Activated CD4-positive, alpha-beta T cell treated with anti-CD3 and anti-CD28 coated beads for 36 hours (primary cell): ENCODE measurements at regions of chr1 and their contacts with region 1.

Region 1: DNA sequence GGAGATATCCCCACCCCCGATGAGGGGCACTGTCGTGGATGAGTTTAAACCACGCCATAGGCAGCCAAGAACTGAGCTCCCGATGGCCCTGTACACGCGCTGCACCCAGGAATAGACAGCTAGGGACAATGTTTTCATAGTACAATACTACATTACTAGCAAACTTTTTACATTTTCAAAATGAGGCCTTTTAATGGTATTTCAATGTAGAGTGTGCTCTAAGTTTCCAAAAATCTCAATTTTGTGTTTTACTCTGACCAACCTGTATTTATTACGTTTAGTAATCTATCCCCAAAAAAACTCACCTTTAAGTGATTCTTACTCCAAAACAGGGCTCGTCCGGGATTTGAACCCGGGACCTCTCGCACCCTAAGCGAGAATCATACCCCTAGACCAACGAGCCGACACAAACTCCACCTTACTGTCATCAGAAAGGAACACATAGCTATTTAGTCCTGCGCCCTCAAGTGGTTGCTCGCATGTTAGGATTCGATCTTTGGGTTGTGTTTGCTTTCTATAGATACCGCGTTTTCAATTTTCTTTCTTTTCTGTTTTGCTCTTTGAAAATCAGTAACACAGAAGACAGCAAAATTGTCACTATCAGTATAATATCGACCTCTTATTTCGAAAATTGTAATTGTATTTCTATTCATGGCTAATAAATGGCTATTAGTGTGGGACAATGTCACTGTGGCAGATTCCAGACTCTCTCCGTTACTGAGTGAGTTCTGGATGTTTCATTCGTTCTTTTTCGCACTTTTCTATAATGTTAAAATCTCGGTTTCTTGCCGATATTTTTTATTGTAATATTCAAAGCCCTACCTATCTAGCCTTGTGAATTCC is 6.4 kb upstream of the MPZL1 start:
- DNase-seq: peak; percentile 91
- ATAC-seq: peak; percentile 49
- H3K4me3 Mint-ChIP-seq: peak overlapping the region; percentile 83
- H3K27ac Mint-ChIP-seq: peak overlapping the region; percentile 91
- H3K4me1 Mint-ChIP-seq: peaks cover 37% of the 10 kb centered on the region
- H3K27me3 Mint-ChIP-seq: no peaks in the 10 kb centered on the region

Region 2: GRCh38 chr1:166838766-166839599 is 876.4 kb before region 1 on chr1 and contains the start of gene POGK:
- CTCF ChIA-PET with region 1: no interaction called
- POLR2A ChIA-PET with region 1: no interaction called
- intact Hi-C with region 1: loop called in 1 of 2 experiments (anchors 1 kb)
- DNase-seq: peak; percentile 93
- ATAC-seq: peak; percentile 97
- H3K4me3 Mint-ChIP-seq: peak within 1 kb of the TSS; percentile 90
- H3K27ac Mint-ChIP-seq: peak within 1 kb of the TSS; percentile 98
- H3K4me1 Mint-ChIP-seq: peaks cover 56% of the 10 kb centered on the region
- H3K27me3 Mint-ChIP-seq: no peaks in the 10 kb centered on the region
- total RNA-seq, gene POGK: 36.2 to 40.6 TPM

Region 3: GRCh38 chr1:167599957-167600581 is 115.3 kb before region 1 on chr1:
- CTCF ChIA-PET with region 1: interaction called, 16 read pairs
- POLR2A ChIA-PET with region 1: no interaction called
- intact Hi-C with region 1: loop called in 1 of 2 experiments (anchors 1 kb)
- DNase-seq: peak; percentile 63
- ATAC-seq: peak; percentile 88
- H3K4me3 Mint-ChIP-seq: peak overlapping the region; percentile 21
- H3K27ac Mint-ChIP-seq: peak overlapping the region; percentile 89
- H3K4me1 Mint-ChIP-seq: peaks cover 37% of the 10 kb centered on the region
- H3K27me3 Mint-ChIP-seq: no peaks in the 10 kb centered on the region

Region 4: GRCh38 chr1:167687919-167688519 is 27.4 kb before region 1 on chr1:
- CTCF ChIA-PET with region 1: interaction called, 12 read pairs
- POLR2A ChIA-PET with region 1: no interaction called
- intact Hi-C with region 1: no loop called
- DNase-seq: peak; percentile 87
- ATAC-seq: peak; percentile 76
- H3K4me3 Mint-ChIP-seq: no peak overlapping the region
- H3K27ac Mint-ChIP-seq: no peak overlapping the region
- H3K4me1 Mint-ChIP-seq: peaks cover 25% of the 10 kb centered on the region
- H3K27me3 Mint-ChIP-seq: no peaks in the 10 kb centered on the region

Region 5: GRCh38 chr1:167803358-167804207 is 88.2 kb after region 1 on chr1:
- CTCF ChIA-PET with region 1: interaction called, 12 read pairs
- POLR2A ChIA-PET with region 1: no interaction called
- intact Hi-C with region 1: loop called (anchors 1 kb)
- DNase-seq: peak; percentile 96
- ATAC-seq: peak; percentile 94
- H3K4me3 Mint-ChIP-seq: peak overlapping the region; percentile 64
- H3K27ac Mint-ChIP-seq: peak overlapping the region; percentile 97
- H3K4me1 Mint-ChIP-seq: peaks cover 24% of the 10 kb centered on the region
- H3K27me3 Mint-ChIP-seq: peaks cover under 1% of the 10 kb centered on the region

Region 6: GRCh38 chr1:168082008-168082876 is 366.9 kb after region 1 on chr1:
- CTCF ChIA-PET with region 1: no interaction called
- POLR2A ChIA-PET with region 1: no interaction called
- intact Hi-C with region 1: loop called (anchors 5 to 10 kb)
- DNase-seq: peak; percentile 84
- ATAC-seq: peak; percentile 92
- H3K4me3 Mint-ChIP-seq: no peak overlapping the region
- H3K27ac Mint-ChIP-seq: peak overlapping the region; percentile 45
- H3K4me1 Mint-ChIP-seq: no peaks in the 10 kb centered on the region
- H3K27me3 Mint-ChIP-seq: no peaks in the 10 kb centered on the region

Region 7: GRCh38 chr1:168225476-168226190 is 510.3 kb after region 1 on chr1 and contains the start of gene SFT2D2:
- CTCF ChIA-PET with region 1: no interaction called
- POLR2A ChIA-PET with region 1: no interaction called
- intact Hi-C with region 1: loop called in 1 of 2 experiments (anchors 2 kb)
- DNase-seq: peak; percentile 88
- ATAC-seq: peak; percentile 90
- H3K4me3 Mint-ChIP-seq: peak within 1 kb of the TSS; percentile 86
- H3K27ac Mint-ChIP-seq: peak within 1 kb of the TSS; percentile 86
- H3K4me1 Mint-ChIP-seq: peaks cover 49% of the 10 kb centered on the region
- H3K27me3 Mint-ChIP-seq: peaks cover 3% of the 10 kb centered on the region
- total RNA-seq, gene SFT2D2: 25.2 to 42.3 TPM